HCT116 (cell line): ENCODE measurements at regions of chr2 and their contacts with region 1.

Region 1: GRCh38 chr2:177164584-177165052 is 48.0 kb upstream of the HNRNPA3 start:
- DNase-seq: peak; percentile 68
- ATAC-seq: peak; percentile 46
- H3K4me3 ChIP-seq: peak overlapping the region; percentile 29 to 50
- H3K27ac ChIP-seq: peak overlapping the region; percentile 65; the same call in 1 of the 2 replicates
- H3K4me1 ChIP-seq: peaks cover 42 to 67% of the 10 kb centered on the region in 2 experiments
- H3K27me3 ChIP-seq: no peaks in the 10 kb centered on the region
- CTCF ChIP-seq: peak; percentile 96 to 100 (median 100)
- POLR2A ChIP-seq: no peak
- RAD21 ChIP-seq: peak; percentile 100

Region 2: DNA sequence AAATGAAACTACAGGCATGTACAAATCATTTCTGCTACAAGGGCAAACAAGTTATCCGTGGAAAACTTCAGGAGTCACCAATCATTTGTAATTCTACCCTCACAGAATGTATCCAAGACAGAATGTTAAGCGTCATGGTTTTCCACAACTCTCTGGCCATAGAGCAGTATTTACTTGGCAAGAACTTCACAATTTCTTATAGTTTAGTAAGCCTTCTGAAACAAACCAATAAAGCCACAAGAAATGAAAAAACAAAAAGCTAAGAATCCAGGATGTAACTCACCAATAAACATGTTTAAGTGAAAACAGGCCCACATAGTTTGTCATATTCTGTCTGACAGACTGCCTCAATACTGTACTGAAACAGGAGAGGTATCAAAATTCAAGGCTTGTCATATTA is 1232.8 kb before region 1 on chr2:
- CTCF ChIA-PET with region 1: no interaction called
- POLR2A ChIA-PET with region 1: no interaction called
- RAD21 ChIA-PET with region 1: no interaction called
- intact Hi-C with region 1: no loop called
- DNase-seq: no peak
- ATAC-seq: no peak
- H3K4me3 ChIP-seq: no peak overlapping the region
- H3K27ac ChIP-seq: no peak overlapping the region
- H3K4me1 ChIP-seq: no peaks in the 10 kb centered on the region
- H3K27me3 ChIP-seq: no peaks in the 10 kb centered on the region
- CTCF ChIP-seq: no peak
- POLR2A ChIP-seq: no peak
- RAD21 ChIP-seq: no peak

Region 3: DNA sequence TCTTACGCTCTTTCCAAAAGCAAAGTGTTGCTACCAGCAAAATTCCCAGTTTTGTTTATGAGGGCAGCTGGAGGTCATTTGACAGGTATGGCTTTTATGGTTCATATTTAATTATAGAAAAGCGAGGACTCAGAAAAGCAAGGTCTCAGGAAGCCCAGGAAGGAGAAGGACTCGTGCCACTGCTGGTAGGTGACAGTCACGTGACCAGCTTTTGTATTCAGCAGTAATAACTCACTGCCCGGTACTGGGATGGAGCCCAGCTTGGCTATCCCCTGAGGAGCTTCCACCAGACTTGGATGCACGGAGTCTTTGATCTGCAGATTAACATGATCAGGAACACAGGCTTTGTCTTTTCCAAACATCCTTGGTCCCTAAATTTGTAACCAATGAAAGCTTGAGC is 203.9 kb before region 1 on chr2:
- CTCF ChIA-PET with region 1: no interaction called
- POLR2A ChIA-PET with region 1: no interaction called
- RAD21 ChIA-PET with region 1: no interaction called
- intact Hi-C with region 1: no loop called
- DNase-seq: no peak
- ATAC-seq: no peak
- H3K4me3 ChIP-seq: no peak overlapping the region
- H3K27ac ChIP-seq: no peak overlapping the region
- H3K4me1 ChIP-seq: no peaks in the 10 kb centered on the region
- H3K27me3 ChIP-seq: peaks cover 64% of the 10 kb centered on the region
- CTCF ChIP-seq: no peak
- POLR2A ChIP-seq: no peak
- RAD21 ChIP-seq: no peak

Region 4: DNA sequence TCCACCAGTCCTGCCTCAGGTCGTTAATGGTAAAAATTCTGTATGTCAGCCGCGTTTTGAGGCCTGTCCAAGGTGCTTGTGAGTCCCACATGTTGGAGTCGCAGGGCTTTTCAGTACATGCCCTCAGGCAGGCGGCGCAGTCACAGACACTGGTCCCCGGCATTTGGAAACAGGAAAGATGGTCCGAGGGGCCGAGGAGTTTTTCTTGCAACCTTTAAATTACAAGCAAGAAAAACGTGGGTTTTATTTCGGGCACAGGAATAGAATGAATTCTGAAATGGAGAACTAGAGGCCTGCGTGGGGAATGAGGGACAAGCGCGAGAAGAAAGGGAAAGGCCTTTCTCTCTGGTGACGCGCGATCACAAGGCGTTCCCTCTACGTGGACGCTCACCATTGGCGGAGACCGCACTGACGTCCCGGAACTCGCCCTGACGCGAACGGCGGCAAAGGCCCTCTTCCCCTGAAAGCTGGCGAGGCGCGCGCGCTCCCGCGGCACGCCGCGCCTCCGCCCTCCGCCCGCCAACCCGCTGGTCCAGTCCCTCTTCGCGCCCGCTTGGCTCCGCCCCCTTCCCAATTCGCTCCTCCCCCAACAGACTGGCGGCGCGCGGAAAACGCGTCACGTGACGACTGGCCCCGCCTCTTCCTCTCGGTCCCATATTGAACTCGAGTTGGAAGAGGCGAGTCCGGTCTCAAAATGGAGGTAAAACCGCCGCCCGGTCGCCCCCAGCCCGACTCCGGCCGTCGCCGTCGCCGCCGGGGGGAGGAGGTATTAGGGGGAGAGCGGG is 47.7 kb after region 1 on chr2 and contains the start of gene HNRNPA3:
- CTCF ChIA-PET with region 1: interaction called, 3 read pairs
- POLR2A ChIA-PET with region 1: interaction called, 7 read pairs
- RAD21 ChIA-PET with region 1: no interaction called
- intact Hi-C with region 1: loop called (anchors 1 kb)
- DNase-seq: peak; percentile 97
- ATAC-seq: peak; percentile 92
- H3K4me3 ChIP-seq: peak within 1 kb of the TSS; percentile 81 to 92
- H3K27ac ChIP-seq: peak within 1 kb of the TSS; percentile 93
- H3K4me1 ChIP-seq: peaks cover 11 to 19% of the 10 kb centered on the region in 2 experiments
- H3K27me3 ChIP-seq: no peaks in the 10 kb centered on the region
- CTCF ChIP-seq: 0 out of 6 replicates have a peak, but pooled peaks of 1 of the 3 experiments have one; percentile 10
- POLR2A ChIP-seq: peak; percentile 72
- RAD21 ChIP-seq: no peak
- total RNA-seq, gene HNRNPA3: 328 TPM

Region 5: GRCh38 chr2:177263451-177264208 is 99.0 kb after region 1 on chr2:
- CTCF ChIA-PET with region 1: interaction called, 22 read pairs
- POLR2A ChIA-PET with region 1: interaction called, 22 read pairs
- RAD21 ChIA-PET with region 1: interaction called in 1 of 2 experiments, 3 read pairs
- intact Hi-C with region 1: loop called (anchors 2 kb)
- DNase-seq: peak; percentile 94
- ATAC-seq: peak; percentile 63
- H3K4me3 ChIP-seq: peak overlapping the region; percentile 76 to 83
- H3K27ac ChIP-seq: peak overlapping the region; percentile 92
- H3K4me1 ChIP-seq: peaks cover 28 to 48% of the 10 kb centered on the region in 2 experiments
- H3K27me3 ChIP-seq: no peaks in the 10 kb centered on the region
- CTCF ChIP-seq: peak; percentile 56 to 81 (median 68)
- POLR2A ChIP-seq: peak; percentile 49
- RAD21 ChIP-seq: peak; percentile 68

Region 6: DNA sequence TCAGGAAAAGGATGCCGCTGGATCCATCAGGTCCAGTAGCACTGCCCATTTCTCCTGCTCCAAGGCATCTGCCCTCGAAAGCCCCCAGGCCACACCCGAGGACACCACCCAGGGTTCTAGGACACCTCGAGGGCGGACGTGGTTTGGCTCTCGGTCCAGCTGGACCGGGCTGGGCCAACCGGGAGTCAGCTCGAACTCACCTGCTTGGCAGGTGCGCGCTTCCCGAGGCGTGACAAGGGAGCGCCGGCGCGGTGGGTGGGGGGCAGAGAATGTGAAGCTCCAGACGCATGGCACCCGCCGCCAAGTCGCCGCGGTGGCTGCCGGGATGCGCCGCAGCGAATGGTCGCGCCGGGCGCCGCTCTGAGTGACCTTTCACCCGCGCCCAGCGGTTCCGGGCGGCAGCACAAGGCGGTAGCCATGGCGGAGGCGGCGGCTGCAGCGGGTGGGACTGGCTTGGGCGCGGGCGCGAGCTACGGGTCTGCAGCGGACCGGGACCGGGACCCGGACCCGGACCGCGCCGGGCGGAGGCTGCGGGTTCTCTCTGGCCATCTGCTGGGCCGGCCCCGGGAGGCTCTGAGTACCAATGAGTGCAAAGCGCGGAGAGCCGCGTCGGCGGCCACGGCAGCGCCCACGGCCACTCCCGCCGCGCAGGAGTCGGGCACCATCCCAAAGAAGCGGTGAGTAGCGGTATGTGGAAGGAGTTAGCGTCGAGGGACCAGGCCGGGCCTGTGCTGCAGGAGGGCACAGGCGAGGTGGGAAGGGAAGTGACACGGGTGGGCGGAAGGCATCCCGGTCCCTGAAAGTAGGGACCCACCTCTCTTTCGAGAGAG is 228.0 kb after region 1 on chr2 and contains the start of gene AGPS:
- CTCF ChIA-PET with region 1: no interaction called
- POLR2A ChIA-PET with region 1: no interaction called
- RAD21 ChIA-PET with region 1: no interaction called
- intact Hi-C with region 1: loop called (anchors 5 kb)
- DNase-seq: peak; percentile 51
- ATAC-seq: peak; percentile 88
- H3K4me3 ChIP-seq: peak within 1 kb of the TSS; percentile 87 to 88
- H3K27ac ChIP-seq: peak within 1 kb of the TSS; percentile 67
- H3K4me1 ChIP-seq: peaks cover 18 to 53% of the 10 kb centered on the region in 2 experiments
- H3K27me3 ChIP-seq: no peaks in the 10 kb centered on the region
- CTCF ChIP-seq: no peak
- POLR2A ChIP-seq: peak; percentile 61
- RAD21 ChIP-seq: no peak
- total RNA-seq, gene AGPS: 66.6 TPM

Region 7: DNA sequence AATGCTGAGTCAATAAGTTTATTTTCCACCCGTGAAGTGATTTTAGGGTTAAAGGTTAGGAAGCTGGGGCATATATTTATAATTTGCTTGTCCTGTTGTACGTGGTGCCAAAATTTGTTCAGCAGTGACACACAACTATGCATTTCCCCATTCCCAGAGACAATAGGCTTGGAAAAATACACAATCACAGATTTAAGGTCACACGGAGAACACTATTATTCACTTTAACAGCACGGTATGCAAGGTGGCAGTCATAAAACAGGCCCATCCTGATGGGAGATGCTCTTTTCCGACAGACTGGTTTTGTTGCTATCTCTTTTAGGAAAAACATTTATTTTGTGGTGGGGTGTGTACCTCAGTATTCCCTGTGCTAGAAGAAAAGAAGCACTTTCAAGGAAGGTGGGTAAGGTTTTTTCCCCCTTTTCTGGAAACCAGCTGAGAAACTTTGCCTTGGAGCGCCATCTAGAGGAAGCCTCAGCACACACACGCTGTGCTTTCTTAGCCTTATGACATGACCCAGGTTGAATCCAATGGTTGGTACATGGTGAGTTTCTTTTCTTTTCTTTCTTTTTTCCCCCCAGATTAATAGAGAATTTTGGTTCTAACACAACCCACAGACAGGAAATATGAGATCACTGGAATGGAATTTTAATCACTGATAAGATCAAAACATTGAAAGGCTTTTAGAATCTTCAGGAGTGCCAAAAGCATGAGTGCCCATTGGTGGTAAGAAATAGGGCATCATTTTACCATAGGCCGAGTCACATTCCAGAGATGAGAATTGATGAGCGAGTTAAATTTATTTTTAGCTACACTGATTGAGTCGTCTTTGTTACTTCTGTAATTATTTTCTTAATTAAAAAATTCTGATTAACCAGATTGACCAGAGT is 560.0 kb after region 1 on chr2:
- CTCF ChIA-PET with region 1: interaction called, 21 read pairs
- POLR2A ChIA-PET with region 1: no interaction called
- RAD21 ChIA-PET with region 1: interaction called in 1 of 2 experiments, 3 read pairs
- intact Hi-C with region 1: loop called (anchors 1 kb)
- DNase-seq: peak; percentile 27
- ATAC-seq: peak; percentile 95
- H3K4me3 ChIP-seq: no peak overlapping the region
- H3K27ac ChIP-seq: no peak overlapping the region
- H3K4me1 ChIP-seq: no peaks in the 10 kb centered on the region
- H3K27me3 ChIP-seq: no peaks in the 10 kb centered on the region
- CTCF ChIP-seq: peak; percentile 79 to 97 (median 93); a peak in 5 of 6 replicates
- POLR2A ChIP-seq: no peak
- RAD21 ChIP-seq: peak; percentile 86